Common myeloid progenitor, CD34-positive (primary cell): ENCODE measurements at regions of chr12 and their contacts with region 1.

Region 1: DNA sequence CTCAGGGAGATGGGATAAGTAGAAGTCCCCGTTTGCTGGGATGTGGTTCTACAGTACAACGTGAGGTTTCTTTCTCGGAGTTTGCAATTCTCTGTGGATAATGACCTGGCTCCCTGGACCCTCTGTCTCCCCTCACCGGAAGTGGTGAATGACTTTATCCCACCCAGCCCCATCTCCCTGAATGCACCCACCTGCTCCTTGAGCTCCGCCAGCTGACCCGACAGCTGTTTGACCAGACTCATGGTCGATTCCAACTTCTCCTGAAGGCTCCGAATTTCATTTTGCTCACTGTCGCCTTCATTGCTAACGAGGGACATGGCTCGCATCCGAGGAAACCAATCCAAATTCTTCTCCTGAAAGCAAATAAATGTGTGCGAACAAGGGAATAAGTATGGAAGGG is 144.6 kb downstream of the SSPN start:
- DNase-seq: no peak
- H3K4me3 ChIP-seq: no peak overlapping the region
- H3K27ac ChIP-seq: no peak overlapping the region
- H3K4me1 ChIP-seq: peaks cover 4 to 23% (median 12%) of the 10 kb centered on the region in 4 experiments
- H3K27me3 ChIP-seq: no peaks in the 10 kb centered on the region

Region 2: GRCh38 chr12:26264215-26264838 is 75.6 kb before region 1 on chr12:
- CTCF ChIA-PET with region 1: no interaction called
- POLR2A ChIA-PET with region 1: no interaction called
- DNase-seq: no peak
- H3K4me3 ChIP-seq: no peak overlapping the region
- H3K27ac ChIP-seq: no peak overlapping the region
- H3K4me1 ChIP-seq: no peaks in the 10 kb centered on the region
- H3K27me3 ChIP-seq: no peaks in the 10 kb centered on the region

Region 3: DNA sequence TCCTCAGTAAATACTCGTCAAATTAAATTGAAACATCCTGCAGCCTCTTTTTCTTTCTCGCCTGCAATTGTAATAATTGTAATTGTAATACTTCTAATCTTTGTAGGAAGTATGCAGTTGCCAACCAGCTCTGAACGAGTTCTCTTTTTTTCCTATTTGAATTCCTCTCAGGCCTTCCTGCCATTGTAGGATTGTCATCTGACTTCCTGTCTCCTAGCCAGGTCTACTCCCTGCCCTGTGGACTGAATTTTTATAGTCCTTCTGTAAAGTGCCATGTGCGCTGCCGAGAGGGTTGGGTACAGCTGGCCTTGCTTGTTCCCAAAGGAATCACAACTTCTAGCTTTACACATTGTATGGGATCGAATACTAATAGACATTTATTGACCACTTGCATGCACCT is 38.7 kb after region 1 on chr12:
- CTCF ChIA-PET with region 1: no interaction called
- POLR2A ChIA-PET with region 1: no interaction called
- DNase-seq: peak in 1 of 3 donors; percentile 43
- H3K4me3 ChIP-seq: peak overlapping the region in 3 of 7 experiments; percentile 2 to 36 (median 11)
- H3K27ac ChIP-seq: no peak overlapping the region
- H3K4me1 ChIP-seq: peaks cover 8 to 18% (median 12%) of the 10 kb centered on the region in 4 experiments
- H3K27me3 ChIP-seq: no peaks in the 10 kb centered on the region

Region 4: GRCh38 chr12:26555139-26555538 is 215.2 kb after region 1 on chr12:
- CTCF ChIA-PET with region 1: no interaction called
- POLR2A ChIA-PET with region 1: interaction called, 10 read pairs
- DNase-seq: no peak
- H3K4me3 ChIP-seq: no peak overlapping the region
- H3K27ac ChIP-seq: no peak overlapping the region
- H3K4me1 ChIP-seq: no peaks in the 10 kb centered on the region
- H3K27me3 ChIP-seq: no peaks in the 10 kb centered on the region